Transverse colon (tissue), 4 donors: ENCODE measurements at regions of chr13 and their contacts with region 1.

Region 1: DNA sequence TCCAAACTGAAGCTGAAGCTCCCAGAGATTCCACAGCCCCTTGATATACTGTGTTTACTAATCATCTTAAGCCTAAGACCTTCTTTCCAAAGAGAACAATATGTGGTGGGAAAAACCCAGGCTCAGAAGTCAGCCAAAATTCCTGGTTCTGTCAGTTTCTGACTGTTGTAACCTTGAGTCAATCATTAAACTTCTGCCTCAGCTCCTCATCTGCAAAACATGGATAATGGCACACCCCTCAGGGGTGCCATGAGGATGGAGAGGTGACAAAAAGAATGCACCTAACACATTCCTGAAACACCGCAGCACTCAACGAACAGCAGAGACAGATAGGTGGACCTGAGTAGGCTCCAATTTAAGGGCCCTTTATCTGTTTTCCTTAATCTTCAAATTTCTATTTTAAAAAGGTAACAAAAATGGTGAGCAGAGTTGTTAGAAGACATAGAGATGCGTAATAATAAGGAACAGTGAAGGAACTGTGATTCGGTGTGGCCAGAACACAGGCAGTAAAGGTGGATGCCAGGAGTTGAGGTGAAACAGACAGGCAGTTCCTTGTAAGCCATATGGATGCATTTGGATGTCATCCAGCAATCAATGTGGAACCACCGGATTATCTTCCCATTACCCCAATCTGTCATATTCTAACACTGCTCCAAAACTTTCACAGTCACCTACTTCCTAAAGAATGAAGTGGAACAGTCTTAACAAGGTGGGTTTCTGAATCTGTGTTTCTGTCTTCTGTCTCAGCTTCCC is 56.6 kb upstream of the DOCK9 start:
- DNase-seq: no peak
- H3K4me3 ChIP-seq: no peak overlapping the region
- H3K27ac ChIP-seq: no peak overlapping the region
- H3K4me1 ChIP-seq: no peaks in the 10 kb centered on the region
- H3K27me3 ChIP-seq: no peaks in the 10 kb centered on the region
- CTCF ChIP-seq: no peak
- EP300 ChIP-seq: no peak
- POLR2A ChIP-seq: no peak

Region 2: GRCh38 chr13:98834254-98834960 is 200.1 kb before region 1 on chr13:
- in situ Hi-C with region 1: no loop called
- intact Hi-C with region 1: no loop called
- DNase-seq: no peak
- H3K4me3 ChIP-seq: no peak overlapping the region
- H3K27ac ChIP-seq: no peak overlapping the region
- H3K4me1 ChIP-seq: no peaks in the 10 kb centered on the region
- H3K27me3 ChIP-seq: no peaks in the 10 kb centered on the region
- CTCF ChIP-seq: no peak
- EP300 ChIP-seq: no peak
- POLR2A ChIP-seq: no peak

Region 3: GRCh38 chr13:98890186-98890585 is 144.3 kb before region 1 on chr13:
- in situ Hi-C with region 1: no loop called
- intact Hi-C with region 1: loop called (anchors 5 kb)
- DNase-seq: no peak
- H3K4me3 ChIP-seq: no peak overlapping the region
- H3K27ac ChIP-seq: no peak overlapping the region
- H3K4me1 ChIP-seq: peaks cover 0 to 4% (median 0%) of the 10 kb centered on the region in 4 donors
- H3K27me3 ChIP-seq: no peaks in the 10 kb centered on the region
- CTCF ChIP-seq: no peak
- EP300 ChIP-seq: no peak
- POLR2A ChIP-seq: no peak